ENCODE measurements at regions of chr13 and their contacts with region 1.

Region 1: DNA sequence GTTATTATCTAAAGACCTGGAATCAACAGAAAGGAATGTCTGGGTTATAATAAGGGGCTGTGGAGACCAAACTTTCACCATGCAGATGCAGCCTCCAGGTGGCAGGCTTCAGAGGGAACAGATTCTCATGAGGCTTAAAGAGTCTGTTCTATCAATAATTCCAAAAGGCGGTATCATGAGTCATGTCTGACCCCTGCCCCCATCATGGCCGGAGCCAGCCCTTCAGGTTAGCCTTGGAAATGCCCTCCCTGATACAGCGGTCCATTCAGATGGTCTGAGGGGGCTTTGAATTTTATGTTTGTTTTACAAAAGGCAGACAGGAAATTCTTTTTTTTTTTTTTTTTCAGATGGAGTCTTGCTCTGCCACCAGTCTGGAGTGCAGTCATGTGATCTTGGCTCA is 21.7 kb upstream of the LAMP1 start:
- DNase-seq: no peak
- H3K4me3 ChIP-seq: no peak overlapping the region
- H3K27ac ChIP-seq: no peak overlapping the region
- H3K4me1 ChIP-seq: no peaks in the 10 kb centered on the region
- H3K27me3 ChIP-seq: no peaks in the 10 kb centered on the region
- CTCF ChIP-seq: peak in 2 of 3 experiments; percentile 30 to 45

Region 2: GRCh38 chr13:113176280-113176679 is 99.1 kb before region 1 on chr13:
- intact Hi-C with region 1: no loop called
- DNase-seq: no peak
- H3K4me3 ChIP-seq: no peak overlapping the region
- H3K27ac ChIP-seq: no peak overlapping the region
- H3K4me1 ChIP-seq: no peaks in the 10 kb centered on the region
- H3K27me3 ChIP-seq: no peaks in the 10 kb centered on the region
- CTCF ChIP-seq: no peak

Region 3: DNA sequence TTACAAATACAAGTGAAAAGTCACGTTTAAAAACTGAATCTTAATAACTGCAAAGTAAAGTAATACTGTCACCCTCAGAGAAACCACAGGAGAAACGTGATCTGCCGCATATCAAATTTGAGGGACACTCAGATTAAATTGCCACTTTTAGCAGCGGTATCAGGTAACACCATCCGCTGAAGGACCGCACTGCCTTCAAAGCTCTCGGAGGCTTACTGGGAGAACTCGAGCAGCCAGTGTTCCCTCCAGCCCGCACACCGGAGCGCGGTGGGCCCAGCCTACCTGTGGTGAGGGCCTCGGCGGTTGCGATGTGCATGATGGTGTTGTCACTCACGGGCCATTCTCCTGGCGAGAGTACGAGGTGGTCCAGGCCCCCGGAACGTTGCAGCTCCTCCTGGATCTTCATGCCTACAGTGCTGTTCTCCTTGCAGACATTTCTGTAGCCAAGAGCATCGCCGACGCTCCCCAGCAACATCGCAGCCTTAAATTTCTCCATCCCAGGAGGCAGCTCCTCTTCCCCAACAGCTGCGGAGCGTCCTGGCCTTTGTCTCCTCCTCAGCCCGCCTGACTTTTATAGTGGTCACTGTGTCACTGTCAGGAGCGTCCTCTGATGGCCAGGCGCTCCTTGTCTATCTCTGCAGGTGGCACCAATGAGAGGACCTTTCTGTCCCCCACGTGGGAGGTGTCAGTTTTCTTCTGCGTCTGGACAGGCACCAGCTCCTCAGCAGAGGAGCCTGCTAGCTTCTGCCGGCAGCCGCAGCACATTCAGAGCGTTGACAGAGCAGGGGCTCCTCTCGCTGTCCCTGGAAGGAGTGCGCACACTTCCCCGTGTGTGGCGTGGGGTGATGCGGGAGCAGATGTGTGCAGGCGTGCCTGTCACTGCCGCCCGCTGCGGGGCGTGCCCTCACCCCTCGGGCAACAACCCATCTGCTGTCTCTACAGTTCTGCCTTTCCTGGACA is 177.8 kb after region 1 on chr13 and contains the start of gene ADPRHL1:
- intact Hi-C with region 1: loop called (anchors 5 kb)
- DNase-seq: peak in 1 of 2 donors; percentile 41
- H3K4me3 ChIP-seq: no peak within 1 kb of the TSS
- H3K27ac ChIP-seq: no peak within 1 kb of the TSS
- H3K4me1 ChIP-seq: no peaks in the 10 kb centered on the region
- H3K27me3 ChIP-seq: no peaks in the 10 kb centered on the region
- CTCF ChIP-seq: no peak
- total RNA-seq, gene ADPRHL1: 11.3 TPM